CD8-positive, alpha-beta memory T cell (primary cell): ENCODE measurements at regions of chr14 and their contacts with region 1.

Region 1: DNA sequence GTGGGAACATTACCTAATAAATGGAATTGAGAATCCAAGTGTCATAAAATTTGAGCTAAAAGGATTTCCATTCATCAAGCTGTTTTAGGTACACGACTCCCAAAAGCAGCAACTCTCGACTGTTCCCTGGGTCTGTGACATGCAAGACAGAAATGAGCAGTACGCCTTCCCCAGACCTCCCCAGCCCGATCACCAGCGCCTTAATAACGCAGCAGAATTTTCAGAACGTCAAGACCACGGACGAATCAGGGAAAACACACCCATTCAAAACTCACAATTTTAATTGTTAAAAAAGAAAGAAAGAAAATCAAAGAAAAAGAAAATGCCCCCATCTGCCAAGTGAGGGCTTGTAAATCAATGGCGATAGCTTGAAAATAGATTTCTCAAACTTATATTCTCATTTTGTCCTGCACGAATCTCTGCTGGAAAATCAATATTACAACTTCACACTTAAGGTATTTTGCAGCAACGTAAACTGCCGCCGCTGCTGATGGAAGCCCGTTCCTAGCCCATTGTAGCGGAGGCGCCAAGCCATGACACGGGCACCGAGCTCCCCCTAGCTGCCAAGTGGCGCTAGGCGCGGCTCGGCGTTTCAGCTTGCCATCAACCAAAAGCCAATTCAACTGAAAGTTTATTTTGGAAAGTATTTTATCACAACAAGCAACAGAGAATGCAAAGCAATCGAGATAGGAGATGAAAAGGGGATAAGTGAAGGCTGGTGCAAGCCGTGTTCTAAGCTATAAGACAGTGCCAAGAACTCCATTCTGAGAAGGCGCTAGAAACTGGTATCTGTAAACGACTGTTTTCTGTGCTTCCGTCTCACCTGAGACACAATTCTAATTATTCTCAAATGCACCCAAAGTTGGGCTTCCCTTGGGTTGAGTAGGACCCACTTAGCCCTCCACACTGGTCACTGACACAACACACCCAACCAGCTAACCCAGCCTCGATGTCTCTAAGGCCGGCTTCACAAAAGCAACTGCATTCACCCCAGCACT is 5.5 kb downstream of the BCL11B start:
- DNase-seq: peak; percentile 83 to 90 (median 85)
- H3K4me3 ChIP-seq: peak overlapping the region; percentile 86
- H3K4me3 Mint-ChIP-seq: peak overlapping the region; percentile 77 to 100 (median 99)
- H3K27ac ChIP-seq: peak overlapping the region; percentile 89
- H3K27ac Mint-ChIP-seq: peak overlapping the region; percentile 78 to 100 (median 100)
- H3K4me1 ChIP-seq: peaks cover 43% of the 10 kb centered on the region
- H3K4me1 Mint-ChIP-seq: peaks cover 61 to 68% (median 66%) of the 10 kb centered on the region in 3 donors
- H3K27me3 ChIP-seq: no peaks in the 10 kb centered on the region
- H3K27me3 Mint-ChIP-seq: peaks cover 0 to 12% of the 10 kb centered on the region in 2 donors

Region 2: DNA sequence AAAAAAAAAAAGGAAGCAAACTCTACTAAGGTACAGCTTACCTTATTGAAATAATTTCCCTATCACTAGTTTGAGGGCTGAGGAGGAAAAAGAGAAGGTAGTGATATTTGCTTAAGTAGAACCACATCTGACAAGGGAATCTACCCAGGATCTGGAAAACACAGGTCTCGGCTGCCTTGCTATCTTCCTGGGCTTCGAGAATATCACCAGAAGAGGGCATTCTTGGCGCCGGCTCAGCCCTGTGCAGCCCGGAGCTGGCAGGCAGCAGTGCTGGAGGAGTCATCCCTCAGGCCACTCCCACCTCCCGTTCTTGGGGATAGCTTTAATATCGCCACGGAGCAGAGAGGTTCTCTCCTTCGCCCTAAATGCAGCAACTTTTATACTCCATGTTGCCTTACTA is 1288.1 kb before region 1 on chr14:
- CTCF ChIA-PET with region 1: interaction called, 22 read pairs
- POLR2A ChIA-PET with region 1: interaction called, 7 read pairs
- DNase-seq: peak; percentile 56 to 82 (median 65)
- H3K4me3 ChIP-seq: peak overlapping the region; percentile 56
- H3K4me3 Mint-ChIP-seq: peak overlapping the region; percentile 86 to 98 (median 89)
- H3K27ac ChIP-seq: peak overlapping the region; percentile 52
- H3K27ac Mint-ChIP-seq: peak overlapping the region; percentile 66 to 99 (median 92)
- H3K4me1 ChIP-seq: peaks cover 53% of the 10 kb centered on the region
- H3K4me1 Mint-ChIP-seq: peaks cover 55 to 64% (median 58%) of the 10 kb centered on the region in 3 donors
- H3K27me3 ChIP-seq: no peaks in the 10 kb centered on the region
- H3K27me3 Mint-ChIP-seq: peaks cover 0 to 1% of the 10 kb centered on the region in 2 donors

Region 3: GRCh38 chr14:99192028-99192621 is 74.4 kb before region 1 on chr14:
- CTCF ChIA-PET with region 1: interaction called, 39 read pairs
- POLR2A ChIA-PET with region 1: interaction called, 33 read pairs
- DNase-seq: peak in 2 of 5 donors; percentile 59 to 60
- H3K4me3 ChIP-seq: peak overlapping the region; percentile 63
- H3K4me3 Mint-ChIP-seq: peak overlapping the region; percentile 83 to 95 (median 88)
- H3K27ac ChIP-seq: peak overlapping the region; percentile 68
- H3K27ac Mint-ChIP-seq: peak overlapping the region; percentile 94 to 98 (median 96)
- H3K4me1 ChIP-seq: peaks cover 97% of the 10 kb centered on the region
- H3K4me1 Mint-ChIP-seq: peaks cover 93 to 100% (median 98%) of the 10 kb centered on the region in 3 donors
- H3K27me3 ChIP-seq: no peaks in the 10 kb centered on the region
- H3K27me3 Mint-ChIP-seq: peaks cover 0 to 9% of the 10 kb centered on the region in 2 donors

Region 4: DNA sequence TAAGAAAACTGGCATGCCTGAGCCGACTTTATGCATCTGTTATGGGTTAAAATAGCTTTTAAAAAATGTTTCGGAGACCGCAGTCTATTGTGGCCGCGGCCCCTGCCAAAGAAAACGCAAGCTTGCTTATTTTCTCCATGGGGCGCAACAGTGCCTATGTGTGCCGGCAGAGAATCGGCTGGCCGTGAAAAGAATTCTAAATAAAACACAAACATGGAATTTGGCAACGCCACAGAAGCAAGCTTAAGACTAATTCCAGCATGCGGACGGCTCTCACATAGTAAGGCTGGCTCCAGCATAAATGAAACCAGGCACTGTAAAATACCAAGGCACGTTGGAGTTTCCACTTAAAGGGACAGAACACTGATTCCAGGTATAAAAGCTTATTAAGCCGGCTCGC is 51.2 kb before region 1 on chr14:
- CTCF ChIA-PET with region 1: interaction called, 29 read pairs
- POLR2A ChIA-PET with region 1: interaction called, 4 read pairs
- DNase-seq: no peak
- H3K4me3 ChIP-seq: peak overlapping the region; percentile 33
- H3K4me3 Mint-ChIP-seq: peak overlapping the region; percentile 42 to 84 (median 77)
- H3K27ac ChIP-seq: no peak overlapping the region
- H3K27ac Mint-ChIP-seq: peak overlapping the region; percentile 17 to 96 (median 86)
- H3K4me1 ChIP-seq: peaks cover 95% of the 10 kb centered on the region
- H3K4me1 Mint-ChIP-seq: peaks cover 94 to 99% (median 99%) of the 10 kb centered on the region in 3 donors
- H3K27me3 ChIP-seq: no peaks in the 10 kb centered on the region
- H3K27me3 Mint-ChIP-seq: peaks cover 0 to 7% of the 10 kb centered on the region in 2 donors

Region 5: DNA sequence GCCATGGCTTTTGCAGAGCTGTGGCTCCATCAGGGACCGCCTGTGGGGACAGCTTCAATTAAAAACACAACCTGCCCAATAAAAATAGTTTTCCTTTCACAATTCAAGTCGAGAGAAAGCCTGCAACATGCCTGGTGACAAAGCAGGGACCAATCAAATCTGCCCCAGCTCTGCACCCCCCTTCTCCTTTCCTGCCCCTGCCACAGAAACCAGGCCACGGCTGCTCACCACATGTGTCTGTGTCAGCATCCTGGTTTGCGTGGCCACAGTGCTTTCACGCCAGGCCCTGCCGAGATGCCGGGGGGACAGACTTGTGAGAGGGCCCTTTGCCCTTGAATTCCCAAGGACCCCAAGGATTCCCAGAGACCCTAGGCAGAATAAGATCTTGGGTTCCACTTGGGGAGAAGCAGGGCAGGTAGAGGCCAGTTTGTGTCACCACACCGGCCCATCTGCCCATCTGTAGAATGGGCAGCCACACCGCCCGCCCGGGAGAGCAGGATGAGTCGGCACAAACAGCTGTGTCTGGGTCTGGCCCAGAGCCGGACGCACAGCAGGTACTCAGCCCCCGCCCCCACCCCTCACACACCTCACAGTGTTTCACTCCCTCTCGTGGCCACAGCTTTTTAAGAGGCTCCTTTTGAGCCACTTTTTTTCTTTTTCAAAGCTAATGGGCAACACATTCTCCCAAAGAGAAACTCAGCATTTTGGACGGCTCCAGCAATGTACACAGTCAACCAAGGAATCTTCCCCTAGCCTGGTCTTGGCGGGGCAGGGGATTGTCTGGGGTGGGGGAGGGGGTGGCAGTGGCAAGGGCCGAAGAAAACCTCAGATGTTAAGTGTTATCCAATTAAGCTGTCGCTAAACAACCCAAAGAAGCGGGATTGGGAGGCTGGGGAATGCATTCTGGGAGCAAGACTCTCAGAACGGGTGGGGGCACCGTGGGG is 36.0 kb before region 1 on chr14:
- CTCF ChIA-PET with region 1: interaction called, 532 read pairs
- POLR2A ChIA-PET with region 1: interaction called, 103 read pairs
- DNase-seq: peak; percentile 82 to 95 (median 89)
- H3K4me3 ChIP-seq: peak overlapping the region; percentile 39
- H3K4me3 Mint-ChIP-seq: peak overlapping the region; percentile 76 to 94 (median 84)
- H3K27ac ChIP-seq: peak overlapping the region; percentile 68
- H3K27ac Mint-ChIP-seq: peak overlapping the region; percentile 97 to 100 (median 99)
- H3K4me1 ChIP-seq: peaks cover 97% of the 10 kb centered on the region
- H3K4me1 Mint-ChIP-seq: peaks cover 95 to 98% (median 95%) of the 10 kb centered on the region in 3 donors
- H3K27me3 ChIP-seq: no peaks in the 10 kb centered on the region
- H3K27me3 Mint-ChIP-seq: peaks cover 0 to 7% of the 10 kb centered on the region in 2 donors

Region 6: DNA sequence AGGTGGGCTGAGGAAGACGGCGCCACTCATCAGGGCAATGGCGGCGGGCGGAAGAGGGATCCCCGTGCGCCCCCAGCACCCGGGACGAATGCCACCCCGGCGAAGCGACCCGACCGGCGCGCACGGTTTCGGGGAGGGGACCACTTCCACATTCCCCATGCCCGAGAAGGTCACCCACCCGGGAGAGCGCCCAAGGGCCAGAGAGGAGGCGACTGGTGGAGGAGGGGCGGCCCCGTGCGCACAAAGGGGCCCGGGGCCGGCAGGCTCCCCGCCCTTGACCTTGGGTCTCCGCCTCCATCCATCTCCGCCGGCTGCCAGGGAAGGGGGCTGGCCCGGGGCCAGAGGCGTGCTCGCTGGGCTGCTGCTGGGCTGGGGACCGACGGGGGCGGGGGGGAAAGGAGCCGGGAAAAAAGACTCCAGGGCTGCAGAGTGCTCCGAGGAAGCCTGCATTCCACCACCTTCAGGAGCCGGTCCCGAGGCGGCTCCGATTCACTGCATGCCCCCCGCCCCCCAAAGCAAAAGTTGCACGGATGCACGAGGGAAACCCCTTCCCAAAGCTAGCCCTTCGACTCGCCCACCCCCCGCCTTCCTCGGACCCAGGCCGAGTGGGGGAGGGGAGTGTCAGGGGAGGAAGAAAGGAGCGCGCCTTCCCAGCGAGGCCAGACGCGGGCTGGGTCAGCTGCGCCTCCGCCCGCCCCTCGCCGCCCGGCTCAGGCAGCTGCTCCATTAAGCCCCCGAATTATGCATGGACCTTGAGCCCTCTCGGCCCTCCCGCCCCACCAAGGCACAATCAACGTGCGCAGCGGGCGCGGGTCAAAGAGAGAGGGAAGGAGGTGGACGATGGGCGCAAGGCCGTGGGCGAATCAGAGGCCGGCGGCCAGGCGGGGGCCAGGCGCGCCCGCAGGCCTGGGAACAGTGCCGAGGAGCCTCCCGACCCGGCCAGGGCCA is 20.6 kb before region 1 on chr14:
- CTCF ChIA-PET with region 1: interaction called, 532 read pairs
- POLR2A ChIA-PET with region 1: interaction called, 63 read pairs
- DNase-seq: no peak
- H3K4me3 ChIP-seq: peak overlapping the region; percentile 70
- H3K4me3 Mint-ChIP-seq: peak overlapping the region; percentile 84 to 94 (median 87)
- H3K27ac ChIP-seq: peak overlapping the region; percentile 57
- H3K27ac Mint-ChIP-seq: peak overlapping the region; percentile 90 to 100 (median 99)
- H3K4me1 ChIP-seq: peaks cover 89% of the 10 kb centered on the region
- H3K4me1 Mint-ChIP-seq: peaks cover 85 to 87% (median 86%) of the 10 kb centered on the region in 3 donors
- H3K27me3 ChIP-seq: no peaks in the 10 kb centered on the region
- H3K27me3 Mint-ChIP-seq: peaks cover 0 to 2% of the 10 kb centered on the region in 2 donors